CD8-positive, alpha-beta T cell (primary cell): ENCODE measurements at regions of chr18 and their contacts with region 1.

Region 1: GRCh38 chr18:70781860-70782453 is 493.1 kb downstream of the SOCS6 start:
- DNase-seq: peak; percentile 32 to 76 (median 65)
- ATAC-seq: peak; percentile 96
- H3K4me3 ChIP-seq: no peak overlapping the region
- H3K4me3 Mint-ChIP-seq: no peak overlapping the region
- H3K27ac ChIP-seq: no peak overlapping the region
- H3K27ac Mint-ChIP-seq: peak overlapping the region; percentile 0
- H3K4me1 ChIP-seq: peaks cover 5% of the 10 kb centered on the region
- H3K4me1 Mint-ChIP-seq: peaks cover 22% of the 10 kb centered on the region
- H3K27me3 ChIP-seq: no peaks in the 10 kb centered on the region
- H3K27me3 Mint-ChIP-seq: no peaks in the 10 kb centered on the region
- CTCF ChIP-seq: peak; percentile 46

Region 2: GRCh38 chr18:70598406-70598805 is 183.6 kb before region 1 on chr18:
- CTCF ChIA-PET with region 1: no interaction called
- POLR2A ChIA-PET with region 1: no interaction called
- intact Hi-C with region 1: loop called (anchors 2 to 5 kb)
- DNase-seq: no peak
- ATAC-seq: no peak
- H3K4me3 ChIP-seq: no peak overlapping the region
- H3K4me3 Mint-ChIP-seq: no peak overlapping the region
- H3K27ac ChIP-seq: no peak overlapping the region
- H3K27ac Mint-ChIP-seq: no peak overlapping the region
- H3K4me1 ChIP-seq: peaks cover 8% of the 10 kb centered on the region
- H3K4me1 Mint-ChIP-seq: peaks cover 11% of the 10 kb centered on the region
- H3K27me3 ChIP-seq: no peaks in the 10 kb centered on the region
- H3K27me3 Mint-ChIP-seq: no peaks in the 10 kb centered on the region
- CTCF ChIP-seq: no peak

Region 3: GRCh38 chr18:71784777-71785176 is 1002.8 kb after region 1 on chr18:
- CTCF ChIA-PET with region 1: no interaction called
- POLR2A ChIA-PET with region 1: no interaction called
- intact Hi-C with region 1: loop called in 1 of 2 experiments (anchors 10 kb)
- DNase-seq: peak in 2 of 9 experiments; percentile 4 to 15
- ATAC-seq: no peak
- H3K4me3 ChIP-seq: no peak overlapping the region
- H3K4me3 Mint-ChIP-seq: no peak overlapping the region
- H3K27ac ChIP-seq: no peak overlapping the region
- H3K27ac Mint-ChIP-seq: no peak overlapping the region
- H3K4me1 ChIP-seq: no peaks in the 10 kb centered on the region
- H3K4me1 Mint-ChIP-seq: no peaks in the 10 kb centered on the region
- H3K27me3 ChIP-seq: no peaks in the 10 kb centered on the region
- H3K27me3 Mint-ChIP-seq: no peaks in the 10 kb centered on the region
- CTCF ChIP-seq: no peak